ENCODE measurements at regions of chr1 and their contacts with region 1.

Region 1: DNA sequence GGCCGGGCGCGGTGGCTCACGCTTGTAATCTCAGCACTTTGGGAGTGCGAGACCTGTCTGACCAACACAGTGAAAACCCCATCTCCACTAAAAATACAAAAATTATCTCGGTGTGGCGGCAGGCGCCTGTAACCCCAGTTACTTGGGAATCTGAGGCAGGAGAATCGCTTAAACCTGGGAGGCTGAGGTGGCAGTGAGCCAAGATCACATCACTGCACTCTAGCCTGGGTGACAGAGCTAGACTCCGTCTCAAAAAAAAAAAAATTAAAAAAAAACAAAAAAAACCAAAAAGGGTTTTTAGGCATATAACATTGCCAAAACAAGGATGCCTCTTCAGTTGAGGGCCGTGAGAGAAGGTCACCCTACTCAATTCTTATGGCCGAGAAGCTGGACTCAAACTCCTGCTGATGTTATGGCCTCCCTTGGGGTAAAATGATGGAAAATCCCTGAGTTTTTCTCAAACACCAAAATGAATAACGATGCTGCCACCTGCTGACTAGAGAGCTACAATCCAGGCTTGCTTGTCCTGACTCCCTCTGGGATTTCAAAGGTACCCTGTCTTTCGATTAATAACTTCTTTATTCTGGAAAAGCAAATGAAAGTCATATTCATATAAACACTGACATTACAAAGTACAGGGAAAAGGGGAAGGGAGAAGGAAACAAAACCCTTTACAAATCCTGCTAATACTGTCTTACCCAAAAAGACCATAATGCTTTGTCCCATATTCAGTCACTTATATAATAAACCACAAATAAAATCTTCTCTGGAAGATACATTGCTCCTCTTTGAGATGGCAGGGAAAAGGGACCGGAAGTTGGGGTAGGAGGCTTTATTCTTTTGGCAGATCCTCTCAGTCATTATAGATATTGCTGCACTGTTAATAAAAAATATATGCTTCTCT is 10.7 kb downstream of the RAB42 start:
- DNase-seq: peak; percentile 55
- H3K4me3 ChIP-seq: no peak overlapping the region
- H3K27ac ChIP-seq: no peak overlapping the region
- H3K4me1 ChIP-seq: peaks cover 0 to 3% (median 0%) of the 10 kb centered on the region in 4 donors
- H3K27me3 ChIP-seq: no peaks in the 10 kb centered on the region
- CTCF ChIP-seq: peak; percentile 55 to 68 (median 57)
- EP300 ChIP-seq: no peak
- POLR2A ChIP-seq: no peak

Region 2: DNA sequence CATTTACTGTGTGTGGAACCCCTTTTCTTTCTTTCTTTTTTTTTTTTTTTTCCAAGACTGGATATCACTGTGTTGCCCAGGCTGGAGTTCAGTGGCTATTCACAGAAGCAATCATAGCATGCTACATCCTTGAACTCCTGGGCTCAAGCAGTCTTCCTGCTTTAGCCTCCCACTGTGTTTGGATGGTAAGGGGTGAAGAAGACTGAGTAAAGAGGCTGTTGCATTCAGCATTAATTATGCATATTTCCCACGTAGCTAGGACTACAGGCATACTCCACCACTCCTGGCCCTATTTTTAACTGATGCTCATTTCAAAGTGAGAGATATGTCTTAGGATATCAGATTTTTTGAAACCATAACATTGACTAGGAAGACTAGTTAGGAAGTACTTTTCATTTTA is 193.7 kb before region 1 on chr1:
- in situ Hi-C with region 1: loop called in 1 of 4 experiments (anchors 5 kb)
- intact Hi-C with region 1: no loop called
- DNase-seq: no peak
- H3K4me3 ChIP-seq: no peak overlapping the region
- H3K27ac ChIP-seq: no peak overlapping the region
- H3K4me1 ChIP-seq: peaks cover 0 to 3% (median 0%) of the 10 kb centered on the region in 4 donors
- H3K27me3 ChIP-seq: no peaks in the 10 kb centered on the region
- CTCF ChIP-seq: no peak
- EP300 ChIP-seq: no peak
- POLR2A ChIP-seq: no peak

Region 3: DNA sequence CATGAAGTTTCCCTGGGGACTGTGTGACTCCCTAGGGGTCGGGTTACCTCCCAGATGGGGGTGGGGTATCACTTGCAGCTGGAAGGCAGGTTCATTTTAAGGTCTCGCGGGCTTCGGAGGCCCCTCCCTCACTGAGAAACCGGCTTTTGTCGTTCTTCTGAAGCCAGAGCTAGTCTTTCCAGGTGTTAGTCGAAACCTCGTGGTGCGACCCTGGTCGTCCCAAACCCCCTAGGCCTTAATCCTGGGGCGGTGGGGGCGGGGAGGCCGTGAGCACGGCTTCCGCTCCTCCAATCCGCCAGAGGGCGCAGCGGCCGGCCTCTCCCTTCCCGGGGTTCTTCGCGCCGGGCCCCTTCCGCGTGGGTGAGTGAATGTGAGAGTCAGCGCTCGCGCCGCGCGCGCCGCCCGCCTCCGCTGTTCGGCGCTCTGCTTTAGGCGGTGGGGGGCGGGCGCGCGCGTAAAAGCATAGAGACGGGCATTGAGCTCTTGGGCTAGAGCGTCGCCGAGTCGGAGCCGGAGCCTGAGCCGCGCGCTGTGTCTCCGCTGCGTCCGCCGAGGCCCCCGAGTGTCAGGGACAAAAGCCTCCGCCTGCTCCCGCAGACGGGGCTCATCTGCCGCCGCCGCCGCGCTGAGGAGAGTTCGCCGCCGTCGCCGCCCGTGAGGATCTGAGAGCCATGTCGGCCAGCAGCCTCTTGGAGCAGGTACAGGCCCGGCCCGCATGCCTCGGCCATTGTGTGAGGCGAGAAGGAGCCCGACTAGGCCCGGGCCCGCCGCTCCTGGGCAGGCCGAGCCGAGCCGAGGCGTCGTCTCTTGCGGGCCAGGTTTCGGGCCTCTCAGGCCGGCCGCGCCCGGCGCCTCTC is 133.9 kb after region 1 on chr1 and contains the start of gene YTHDF2:
- in situ Hi-C with region 1: no loop called
- intact Hi-C with region 1: no loop called
- DNase-seq: peak; percentile 98
- H3K4me3 ChIP-seq: peak within 1 kb of the TSS; percentile 65 to 96 (median 95)
- H3K27ac ChIP-seq: peak within 1 kb of the TSS; percentile 95 to 99 (median 99)
- H3K4me1 ChIP-seq: peaks cover 16 to 61% (median 26%) of the 10 kb centered on the region in 4 donors
- H3K27me3 ChIP-seq: no peaks in the 10 kb centered on the region
- CTCF ChIP-seq: peak; percentile 82 to 98 (median 91)
- EP300 ChIP-seq: no peak
- POLR2A ChIP-seq: peak; percentile 94
- total RNA-seq, gene YTHDF2: 33.2 to 56.1 (median 45.8) TPM